Heart right ventricle (tissue), 16 donors: ENCODE measurements at regions of chr11 and their contacts with region 1.

Region 1: DNA sequence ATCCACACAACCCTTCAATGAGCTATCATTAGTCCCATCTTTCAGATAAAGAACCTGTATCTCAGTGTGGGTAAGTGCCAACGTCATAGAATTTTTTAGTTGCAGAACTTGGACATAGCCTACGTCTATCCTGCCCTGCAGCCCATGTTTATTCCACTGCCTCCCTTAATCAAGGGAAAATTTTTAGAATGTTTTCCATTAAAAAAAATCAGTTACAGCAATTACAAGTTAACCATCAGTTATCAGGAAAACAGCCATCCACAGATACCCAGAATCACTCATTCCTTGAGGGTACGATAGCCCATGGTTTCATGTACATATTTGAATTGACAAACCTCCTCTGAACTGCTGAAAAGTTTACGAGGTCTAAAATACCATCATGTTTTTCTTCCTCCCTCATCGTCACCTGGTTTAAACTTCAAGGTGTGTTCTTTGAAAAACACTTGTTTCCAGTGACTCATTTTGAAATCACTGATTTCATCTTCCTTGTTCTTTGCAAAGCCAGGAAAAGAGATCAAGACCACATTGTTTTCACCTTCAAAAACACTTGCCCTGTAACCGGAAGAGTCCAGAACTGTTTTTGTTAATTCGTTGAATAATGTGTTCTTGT is 100.9 kb downstream of the FAM76B start:
- DNase-seq: no peak
- ATAC-seq: peak in 3 of 8 donors; percentile 19 to 56 (median 51)
- H3K4me3 ChIP-seq: no peak overlapping the region
- H3K27ac ChIP-seq: peak overlapping the region in 4 of 10 donors; percentile 7 to 67 (median 26)
- H3K4me1 ChIP-seq: peaks cover 0 to 16% (median 0%) of the 10 kb centered on the region in 9 donors
- H3K27me3 ChIP-seq: no peaks in the 10 kb centered on the region
- CTCF ChIP-seq: no peak

Region 2: DNA sequence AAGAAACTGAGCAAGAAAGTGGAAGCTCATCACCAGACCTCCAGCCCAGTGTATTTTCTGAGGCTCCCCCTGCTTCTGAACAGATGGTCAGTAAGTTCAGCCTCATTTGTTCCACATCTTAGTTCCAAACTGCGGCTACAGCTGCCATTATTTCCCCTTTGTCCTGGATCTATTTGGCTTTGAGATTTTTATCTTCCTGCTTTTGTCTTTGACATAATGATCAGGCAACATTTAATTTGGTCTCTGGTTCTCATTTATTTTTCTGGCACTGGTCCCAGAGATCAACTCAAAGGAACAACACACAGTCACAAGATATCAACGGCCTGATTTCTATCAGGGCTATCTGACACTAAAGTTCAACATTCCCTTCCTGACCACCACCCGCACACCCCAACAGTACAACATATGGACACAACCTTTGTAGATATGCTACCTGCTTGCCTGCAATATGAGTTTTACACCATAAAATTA is 36.6 kb before region 1 on chr11:
- intact Hi-C with region 1: loop called in 1 of 10 experiments (anchors 5 kb)
- DNase-seq: peak in 1 of 2 donors; percentile 18
- ATAC-seq: peak in 7 of 8 donors; percentile 27 to 90 (median 81)
- H3K4me3 ChIP-seq: no peak overlapping the region
- H3K27ac ChIP-seq: peak overlapping the region in 6 of 10 donors; percentile 13 to 51 (median 28)
- H3K4me1 ChIP-seq: peaks cover 0 to 18% (median 8%) of the 10 kb centered on the region in 9 donors
- H3K27me3 ChIP-seq: no peaks in the 10 kb centered on the region
- CTCF ChIP-seq: no peak

Region 3: DNA sequence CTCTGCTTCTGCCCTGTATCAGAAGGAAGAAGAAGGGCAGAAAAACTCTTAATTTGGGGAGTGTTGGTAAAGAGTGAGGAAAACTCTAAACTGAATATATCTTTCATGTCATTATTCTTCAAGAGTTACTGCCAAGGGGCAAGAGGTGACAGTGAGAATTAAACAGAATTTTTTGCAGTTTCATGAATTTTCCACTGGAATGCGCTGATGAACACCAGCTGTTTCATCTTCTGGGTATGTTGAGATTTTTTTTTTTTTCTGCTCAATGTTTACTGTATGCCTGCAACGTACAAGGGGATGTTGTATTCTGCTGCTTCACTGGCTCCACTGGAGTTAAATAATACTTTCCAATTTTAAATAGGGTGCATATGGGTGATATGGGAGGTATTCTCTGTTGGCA is 16.9 kb before region 1 on chr11:
- intact Hi-C with region 1: loop called in 1 of 10 experiments (anchors 2 kb)
- DNase-seq: no peak
- ATAC-seq: no peak
- H3K4me3 ChIP-seq: no peak overlapping the region
- H3K27ac ChIP-seq: no peak overlapping the region
- H3K4me1 ChIP-seq: peaks cover 0 to 22% (median 6%) of the 10 kb centered on the region in 9 donors
- H3K27me3 ChIP-seq: no peaks in the 10 kb centered on the region
- CTCF ChIP-seq: no peak